B cell (primary cell): ENCODE measurements at regions of chr5 and their contacts with region 1.

Region 1: GRCh38 chr5:131382407-131383395 is 118.8 kb downstream of the CDC42SE2 start:
- DNase-seq: peak; percentile 87
- ATAC-seq: peak; percentile 72
- H3K4me3 ChIP-seq: peak overlapping the region in 1 of 5 experiments; percentile 15
- H3K4me3 Mint-ChIP-seq: peak overlapping the region; percentile 68
- H3K27ac ChIP-seq: peak overlapping the region; percentile 99
- H3K27ac Mint-ChIP-seq: peak overlapping the region; percentile 86
- H3K4me1 ChIP-seq: peaks cover 52 to 55% of the 10 kb centered on the region in 2 donors
- H3K4me1 Mint-ChIP-seq: peaks cover 58% of the 10 kb centered on the region
- H3K27me3 ChIP-seq: no peaks in the 10 kb centered on the region
- H3K27me3 Mint-ChIP-seq: no peaks in the 10 kb centered on the region
- CTCF ChIP-seq: peak; percentile 75

Region 2: GRCh38 chr5:131109540-131110255 is 273.0 kb before region 1 on chr5:
- CTCF ChIA-PET with region 1: interaction called, 7 read pairs
- POLR2A ChIA-PET with region 1: no interaction called
- intact Hi-C with region 1: loop called (anchors 5 kb)
- DNase-seq: peak; percentile 53
- ATAC-seq: peak; percentile 39
- H3K4me3 ChIP-seq: no peak overlapping the region
- H3K4me3 Mint-ChIP-seq: no peak overlapping the region
- H3K27ac ChIP-seq: no peak overlapping the region
- H3K27ac Mint-ChIP-seq: no peak overlapping the region
- H3K4me1 ChIP-seq: no peaks in the 10 kb centered on the region
- H3K4me1 Mint-ChIP-seq: no peaks in the 10 kb centered on the region
- H3K27me3 ChIP-seq: no peaks in the 10 kb centered on the region
- H3K27me3 Mint-ChIP-seq: no peaks in the 10 kb centered on the region
- CTCF ChIP-seq: peak; percentile 87

Region 3: DNA sequence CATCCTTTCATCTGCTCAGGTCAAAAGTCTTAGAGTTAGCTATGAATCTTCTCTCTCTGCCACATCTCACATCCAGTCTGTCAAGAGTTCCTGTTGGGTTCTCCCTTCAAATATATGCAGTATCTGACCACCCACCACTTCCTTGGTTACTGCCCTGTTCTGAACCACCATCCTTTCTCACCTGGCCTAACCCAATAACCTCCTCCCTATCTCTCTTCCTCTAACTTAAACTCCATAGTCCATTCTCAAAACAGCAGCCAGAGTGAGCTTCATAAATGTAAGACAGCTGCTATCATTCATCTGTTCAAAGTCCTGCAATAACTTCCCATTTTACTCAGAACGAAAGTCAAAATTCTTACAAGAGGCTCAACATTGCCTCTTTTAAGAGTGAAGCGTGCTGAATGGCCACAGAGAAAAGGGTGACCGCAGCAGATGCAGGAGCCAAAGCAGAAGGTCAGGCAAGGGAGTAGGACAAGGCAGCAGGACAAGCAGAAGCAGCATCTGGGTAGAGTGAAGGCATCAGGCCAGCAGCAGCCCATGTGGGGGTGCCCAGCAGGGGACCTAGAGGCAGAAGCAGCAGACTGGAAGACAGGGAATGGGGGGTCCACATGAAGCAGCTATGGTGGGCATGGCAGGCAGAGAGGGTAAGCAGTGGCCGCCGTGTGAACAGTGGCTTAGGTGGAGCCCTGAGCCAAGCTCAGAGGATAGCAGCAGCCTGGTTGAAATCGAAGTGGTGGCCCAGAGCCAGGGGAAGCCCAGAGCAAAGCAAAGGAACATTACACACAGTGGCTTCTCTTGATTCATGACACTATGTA is 158.1 kb before region 1 on chr5:
- CTCF ChIA-PET with region 1: interaction called, 12 read pairs
- POLR2A ChIA-PET with region 1: no interaction called
- intact Hi-C with region 1: no loop called
- DNase-seq: peak; percentile 73
- ATAC-seq: peak; percentile 82
- H3K4me3 ChIP-seq: peak overlapping the region in 1 of 5 experiments; percentile 8
- H3K4me3 Mint-ChIP-seq: no peak overlapping the region
- H3K27ac ChIP-seq: peak overlapping the region; percentile 59 to 75
- H3K27ac Mint-ChIP-seq: no peak overlapping the region
- H3K4me1 ChIP-seq: peaks cover 48 to 51% of the 10 kb centered on the region in 2 donors
- H3K4me1 Mint-ChIP-seq: peaks cover 21% of the 10 kb centered on the region
- H3K27me3 ChIP-seq: no peaks in the 10 kb centered on the region
- H3K27me3 Mint-ChIP-seq: no peaks in the 10 kb centered on the region
- CTCF ChIP-seq: no peak

Region 4: DNA sequence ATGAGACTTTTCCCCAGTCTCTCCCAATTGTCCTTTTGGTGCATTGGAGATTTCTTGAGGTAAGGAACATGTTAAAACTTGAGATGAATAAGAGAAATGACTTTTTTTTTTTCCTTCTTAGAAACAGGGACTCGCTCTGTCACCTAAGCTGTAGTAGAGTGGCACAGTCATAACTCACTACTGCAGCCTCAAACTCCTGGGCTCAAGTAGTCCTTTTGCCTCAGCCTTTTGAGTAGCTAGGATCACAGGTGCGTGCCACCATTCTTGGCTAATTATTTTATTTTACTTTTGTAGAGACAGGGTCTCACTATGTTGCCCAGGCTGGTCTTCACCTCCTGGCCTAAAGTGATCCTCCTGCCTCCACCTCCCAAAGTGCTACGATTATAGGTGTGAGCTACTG is 93.0 kb before region 1 on chr5:
- CTCF ChIA-PET with region 1: interaction called, 10 read pairs
- POLR2A ChIA-PET with region 1: interaction called, 5 read pairs
- intact Hi-C with region 1: no loop called
- DNase-seq: no peak
- ATAC-seq: no peak
- H3K4me3 ChIP-seq: no peak overlapping the region
- H3K4me3 Mint-ChIP-seq: peak overlapping the region; percentile 77
- H3K27ac ChIP-seq: peak overlapping the region; percentile 45 to 83
- H3K27ac Mint-ChIP-seq: peak overlapping the region; percentile 73
- H3K4me1 ChIP-seq: peaks cover 37 to 41% of the 10 kb centered on the region in 2 donors
- H3K4me1 Mint-ChIP-seq: peaks cover 55% of the 10 kb centered on the region
- H3K27me3 ChIP-seq: no peaks in the 10 kb centered on the region
- H3K27me3 Mint-ChIP-seq: no peaks in the 10 kb centered on the region
- CTCF ChIP-seq: no peak

Region 5: GRCh38 chr5:131394128-131394527 is 11.4 kb after region 1 on chr5:
- CTCF ChIA-PET with region 1: interaction called, 15 read pairs
- POLR2A ChIA-PET with region 1: no interaction called
- intact Hi-C with region 1: loop called (anchors 1 kb)
- DNase-seq: peak; percentile 83
- ATAC-seq: peak; percentile 93
- H3K4me3 ChIP-seq: peak overlapping the region in 1 of 5 experiments; percentile 17
- H3K4me3 Mint-ChIP-seq: peak overlapping the region; percentile 75
- H3K27ac ChIP-seq: peak overlapping the region; percentile 77 to 89
- H3K27ac Mint-ChIP-seq: peak overlapping the region; percentile 85
- H3K4me1 ChIP-seq: peaks cover 21 to 22% of the 10 kb centered on the region in 2 donors
- H3K4me1 Mint-ChIP-seq: peaks cover 64% of the 10 kb centered on the region
- H3K27me3 ChIP-seq: no peaks in the 10 kb centered on the region
- H3K27me3 Mint-ChIP-seq: no peaks in the 10 kb centered on the region
- CTCF ChIP-seq: no peak

Region 6: GRCh38 chr5:131796793-131797693 is 414.3 kb after region 1 on chr5 and contains the start of gene FNIP1:
- CTCF ChIA-PET with region 1: no interaction called
- POLR2A ChIA-PET with region 1: no interaction called
- intact Hi-C with region 1: loop called (anchors 10 kb)
- DNase-seq: peak; percentile 98
- ATAC-seq: peak; percentile 93
- H3K4me3 ChIP-seq: peak within 1 kb of the TSS; percentile 66 to 82 (median 76)
- H3K4me3 Mint-ChIP-seq: peak within 1 kb of the TSS; percentile 98
- H3K27ac ChIP-seq: peak within 1 kb of the TSS; percentile 82 to 100
- H3K27ac Mint-ChIP-seq: peak within 1 kb of the TSS; percentile 96
- H3K4me1 ChIP-seq: peaks cover 15 to 21% of the 10 kb centered on the region in 2 donors
- H3K4me1 Mint-ChIP-seq: peaks cover 40% of the 10 kb centered on the region
- H3K27me3 ChIP-seq: no peaks in the 10 kb centered on the region
- H3K27me3 Mint-ChIP-seq: no peaks in the 10 kb centered on the region
- CTCF ChIP-seq: no peak
- total RNA-seq, gene FNIP1: 52.8 and 57.8 TPM in 2 replicates